Heart right ventricle (tissue), 16 donors: ENCODE measurements at regions of chr2 and their contacts with region 1.

Region 1: GRCh38 chr2:27647737-27648136 is 15.7 kb downstream of the SUPT7L start:
- DNase-seq: no peak
- ATAC-seq: no peak
- H3K4me3 ChIP-seq: no peak overlapping the region
- H3K27ac ChIP-seq: no peak overlapping the region
- H3K4me1 ChIP-seq: no peaks in the 10 kb centered on the region
- H3K27me3 ChIP-seq: no peaks in the 10 kb centered on the region
- CTCF ChIP-seq: no peak

Region 2: GRCh38 chr2:27527182-27527581 is 120.6 kb before region 1 on chr2:
- intact Hi-C with region 1: no loop called
- DNase-seq: no peak
- ATAC-seq: no peak
- H3K4me3 ChIP-seq: no peak overlapping the region
- H3K27ac ChIP-seq: no peak overlapping the region
- H3K4me1 ChIP-seq: no peaks in the 10 kb centered on the region
- H3K27me3 ChIP-seq: peaks cover 0 to 23% (median 0%) of the 10 kb centered on the region in 7 donors
- CTCF ChIP-seq: no peak

Region 3: DNA sequence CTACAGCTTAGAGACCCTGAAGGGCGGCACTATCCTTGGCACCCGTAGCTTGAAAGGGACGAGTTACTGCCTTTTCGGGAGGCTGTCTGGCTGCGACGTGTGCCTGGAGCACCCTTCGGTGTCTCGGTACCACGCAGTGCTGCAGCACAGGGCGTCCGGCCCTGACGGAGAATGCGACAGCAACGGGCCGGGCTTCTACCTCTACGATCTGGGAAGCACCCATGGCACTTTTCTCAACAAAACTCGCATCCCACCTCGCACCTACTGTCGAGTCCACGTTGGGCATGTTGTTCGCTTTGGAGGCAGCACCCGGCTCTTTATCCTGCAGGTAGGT is 16.5 kb after region 1 on chr2:
- intact Hi-C with region 1: loop called in 1 of 10 experiments (anchors 1 kb)
- DNase-seq: no peak
- ATAC-seq: peak in 1 of 8 donors; percentile 9
- H3K4me3 ChIP-seq: peak overlapping the region; percentile 80 to 98 (median 89)
- H3K27ac ChIP-seq: peak overlapping the region in 9 of 10 donors; percentile 89 to 98 (median 93)
- H3K4me1 ChIP-seq: peaks cover 0 to 49% (median 31%) of the 10 kb centered on the region in 9 donors
- H3K27me3 ChIP-seq: no peaks in the 10 kb centered on the region
- CTCF ChIP-seq: no peak

Region 4: DNA sequence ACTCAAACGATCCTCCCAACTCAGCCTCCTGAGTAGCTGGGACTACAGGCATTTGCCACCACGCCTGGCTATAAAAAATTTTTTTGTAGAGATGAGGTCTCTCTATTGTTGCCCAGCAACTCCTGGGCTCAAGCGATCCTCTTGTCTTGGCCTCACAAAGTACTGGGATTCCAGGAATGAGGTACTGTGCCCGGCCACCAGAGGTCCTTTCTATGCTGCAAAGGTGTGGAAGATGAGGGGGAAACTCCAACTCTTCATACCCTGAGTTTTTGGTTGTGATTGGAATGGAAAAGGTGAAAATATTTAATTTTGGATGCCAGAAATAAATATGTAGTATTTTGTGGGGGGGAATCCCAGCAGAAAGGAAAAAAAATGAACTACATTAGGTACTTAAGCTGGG is 159.7 kb after region 1 on chr2:
- intact Hi-C with region 1: no loop called
- DNase-seq: no peak
- ATAC-seq: peak in 4 of 8 donors; percentile 40 to 59 (median 51)
- H3K4me3 ChIP-seq: no peak overlapping the region
- H3K27ac ChIP-seq: no peak overlapping the region
- H3K4me1 ChIP-seq: peaks cover 0 to 45% (median 0%) of the 10 kb centered on the region in 9 donors
- H3K27me3 ChIP-seq: no peaks in the 10 kb centered on the region
- CTCF ChIP-seq: peak in 7 of 9 donors; percentile 45 to 63 (median 57)